CD4-positive, alpha-beta T cell (primary cell): ENCODE measurements at regions of chr4 and their contacts with region 1.

Region 1: DNA sequence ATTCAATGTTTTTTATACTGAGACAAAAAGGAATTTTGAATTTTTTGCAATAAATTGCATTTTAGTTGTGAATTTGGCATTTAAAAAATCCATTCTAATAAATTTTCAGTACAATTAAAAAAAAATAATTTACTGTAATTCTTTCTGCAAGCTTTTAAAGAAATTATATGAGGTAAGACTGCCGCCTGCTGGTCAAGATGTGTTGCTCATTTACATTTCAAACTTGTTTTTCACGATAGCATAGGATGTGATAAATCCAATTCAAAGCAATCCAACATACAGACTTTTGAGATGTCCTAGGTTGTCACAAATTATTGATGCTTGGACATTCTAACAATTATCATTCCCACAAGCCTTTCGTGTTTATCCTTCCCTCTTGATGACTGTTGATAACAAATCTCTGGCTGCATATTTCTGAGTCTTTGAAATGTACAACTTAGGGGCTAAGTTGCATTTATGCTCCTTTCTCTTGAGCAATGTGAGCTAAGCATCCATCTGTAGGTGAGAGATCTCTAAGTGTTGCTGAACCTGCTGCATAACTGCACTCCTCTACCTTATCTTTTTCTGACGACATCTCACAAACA is 21.7 kb upstream of the MFAP3L start:
- DNase-seq: peak; percentile 27 to 79 (median 46)
- ATAC-seq: no peak
- H3K4me3 ChIP-seq: no peak overlapping the region
- H3K4me3 Mint-ChIP-seq: no peak overlapping the region
- H3K27ac ChIP-seq: no peak overlapping the region
- H3K27ac Mint-ChIP-seq: no peak overlapping the region
- H3K4me1 ChIP-seq: no peaks in the 10 kb centered on the region
- H3K4me1 Mint-ChIP-seq: no peaks in the 10 kb centered on the region
- H3K27me3 ChIP-seq: no peaks in the 10 kb centered on the region
- H3K27me3 Mint-ChIP-seq: peaks cover 5% of the 10 kb centered on the region
- CTCF ChIP-seq: peak; percentile 89

Region 2: DNA sequence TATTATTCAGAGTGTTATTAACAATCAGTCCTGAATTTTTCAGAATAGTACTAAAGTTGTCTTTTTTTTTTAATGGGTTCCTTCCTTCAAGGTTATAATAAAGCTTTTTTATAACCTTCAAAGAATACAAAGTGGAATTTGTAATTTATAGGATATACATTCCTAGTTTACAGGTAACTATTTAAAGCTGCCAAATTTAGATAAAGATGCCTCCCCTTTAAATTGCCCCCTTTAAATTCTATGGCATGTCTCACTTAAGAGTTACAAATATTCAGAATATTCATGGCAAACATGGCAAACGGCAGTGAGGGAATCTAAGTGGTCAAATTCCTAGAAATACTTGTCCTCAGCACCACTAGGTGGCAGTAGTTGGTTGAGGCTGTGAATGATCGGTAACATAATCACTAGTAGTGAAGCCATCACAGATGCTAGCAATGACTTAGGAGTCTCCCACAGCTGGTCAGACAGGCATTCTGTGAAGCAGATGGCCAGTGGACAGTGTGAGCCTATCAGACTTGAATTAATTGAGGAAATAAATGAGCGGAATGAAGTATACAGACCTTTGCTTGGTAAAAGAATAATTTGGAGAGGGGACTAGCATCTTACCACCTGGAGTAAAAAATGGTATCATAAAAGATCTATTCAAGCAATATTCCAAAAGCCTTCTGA is 1124.2 kb before region 1 on chr4:
- CTCF ChIA-PET with region 1: no interaction called
- POLR2A ChIA-PET with region 1: no interaction called
- intact Hi-C with region 1: loop called (anchors 5 kb)
- DNase-seq: peak in 13 of 14 experiments; percentile 3 to 79 (median 38)
- ATAC-seq: peak; percentile 46
- H3K4me3 ChIP-seq: no peak overlapping the region
- H3K4me3 Mint-ChIP-seq: no peak overlapping the region
- H3K27ac ChIP-seq: no peak overlapping the region
- H3K27ac Mint-ChIP-seq: no peak overlapping the region
- H3K4me1 ChIP-seq: no peaks in the 10 kb centered on the region
- H3K4me1 Mint-ChIP-seq: no peaks in the 10 kb centered on the region
- H3K27me3 ChIP-seq: no peaks in the 10 kb centered on the region
- H3K27me3 Mint-ChIP-seq: no peaks in the 10 kb centered on the region
- CTCF ChIP-seq: peak; percentile 86

Region 3: DNA sequence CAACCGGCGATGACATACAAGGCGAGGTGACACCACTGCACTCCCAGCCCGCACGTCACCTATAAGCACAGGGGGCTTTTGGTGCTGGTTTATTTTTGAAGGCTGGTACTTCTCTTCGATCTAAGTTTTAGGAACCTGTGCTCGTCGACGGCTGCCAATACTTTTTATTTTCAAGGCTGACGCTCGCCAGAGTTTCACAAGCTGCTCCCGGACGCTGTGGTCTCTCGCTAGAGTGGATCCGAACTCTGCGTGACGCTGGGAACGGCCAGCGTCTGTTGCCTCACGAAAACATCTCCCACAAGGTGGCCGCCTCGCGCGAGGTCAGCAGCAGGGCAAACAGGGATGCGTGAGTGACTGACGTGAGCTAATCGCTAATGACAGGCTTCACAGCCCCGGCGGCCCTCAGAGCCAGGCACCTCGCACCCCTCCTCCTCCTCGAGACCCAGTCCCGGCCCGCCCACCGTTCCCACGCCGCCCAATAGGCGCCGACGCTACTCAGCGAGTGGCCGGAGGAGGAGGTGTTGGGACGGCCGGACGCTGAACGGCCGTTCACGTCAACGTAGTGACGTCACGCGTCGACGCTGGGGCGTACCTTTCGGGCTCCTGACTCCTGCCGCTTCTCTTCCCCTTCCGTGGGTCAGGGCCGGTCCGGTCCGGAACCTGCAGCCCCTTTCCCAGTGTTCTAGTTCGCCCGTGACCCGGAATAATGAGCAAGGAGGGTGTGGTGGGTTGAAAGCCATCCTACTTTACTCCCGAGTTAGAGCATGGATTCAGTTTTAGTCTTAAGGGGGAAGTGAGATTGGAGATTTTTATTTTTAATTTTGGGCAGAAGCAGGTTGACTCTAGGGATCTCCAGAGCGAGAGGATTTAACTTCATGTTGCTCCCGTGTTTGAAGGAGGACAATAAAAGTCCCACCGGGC is 427.6 kb before region 1 on chr4 and contains the start of gene CLCN3:
- CTCF ChIA-PET with region 1: interaction called, 3 read pairs
- POLR2A ChIA-PET with region 1: interaction called, 3 read pairs
- intact Hi-C with region 1: loop called in 1 of 2 experiments (anchors 5 kb)
- DNase-seq: peak; percentile 72 to 94 (median 87)
- ATAC-seq: peak; percentile 65
- H3K4me3 ChIP-seq: peak within 1 kb of the TSS; percentile 91
- H3K4me3 Mint-ChIP-seq: peak within 1 kb of the TSS; percentile 98
- H3K27ac ChIP-seq: peak within 1 kb of the TSS; percentile 94 to 96
- H3K27ac Mint-ChIP-seq: peak within 1 kb of the TSS; percentile 98
- H3K4me1 ChIP-seq: peaks cover 19% of the 10 kb centered on the region
- H3K4me1 Mint-ChIP-seq: peaks cover 74% of the 10 kb centered on the region
- H3K27me3 ChIP-seq: no peaks in the 10 kb centered on the region
- H3K27me3 Mint-ChIP-seq: no peaks in the 10 kb centered on the region
- CTCF ChIP-seq: no peak
- total RNA-seq, gene CLCN3: 9.0 to 9.2 TPM

Region 4: GRCh38 chr4:169707958-169708643 is 339.8 kb before region 1 on chr4:
- CTCF ChIA-PET with region 1: no interaction called
- POLR2A ChIA-PET with region 1: no interaction called
- intact Hi-C with region 1: no loop called
- DNase-seq: no peak
- ATAC-seq: no peak
- H3K4me3 ChIP-seq: no peak overlapping the region
- H3K4me3 Mint-ChIP-seq: no peak overlapping the region
- H3K27ac ChIP-seq: no peak overlapping the region
- H3K27ac Mint-ChIP-seq: no peak overlapping the region
- H3K4me1 ChIP-seq: no peaks in the 10 kb centered on the region
- H3K4me1 Mint-ChIP-seq: no peaks in the 10 kb centered on the region
- H3K27me3 ChIP-seq: no peaks in the 10 kb centered on the region
- H3K27me3 Mint-ChIP-seq: no peaks in the 10 kb centered on the region
- CTCF ChIP-seq: no peak

Region 5: GRCh38 chr4:169810325-169811323 is 237.2 kb before region 1 on chr4:
- CTCF ChIA-PET with region 1: interaction called, 10 read pairs
- POLR2A ChIA-PET with region 1: no interaction called
- intact Hi-C with region 1: loop called (anchors 1 kb)
- DNase-seq: peak in 6 of 14 experiments; percentile 5 to 73 (median 46)
- ATAC-seq: no peak
- H3K4me3 ChIP-seq: no peak overlapping the region
- H3K4me3 Mint-ChIP-seq: no peak overlapping the region
- H3K27ac ChIP-seq: no peak overlapping the region
- H3K27ac Mint-ChIP-seq: no peak overlapping the region
- H3K4me1 ChIP-seq: no peaks in the 10 kb centered on the region
- H3K4me1 Mint-ChIP-seq: no peaks in the 10 kb centered on the region
- H3K27me3 ChIP-seq: peaks cover 0 to 7% of the 10 kb centered on the region in 2 experiments
- H3K27me3 Mint-ChIP-seq: peaks cover 6% of the 10 kb centered on the region
- CTCF ChIP-seq: peak; percentile 81